Naive thymus-derived CD4-positive, alpha-beta T cell (primary cell): ENCODE measurements at regions of chr12 and their contacts with region 1.

Region 1: GRCh38 chr12:95473884-95474659 is at the start of gene METAP2:
- DNase-seq: peak; percentile 75 to 93 (median 87)
- ATAC-seq: peak; percentile 98
- H3K4me3 ChIP-seq: peak within 1 kb of the TSS; percentile 81
- H3K4me3 Mint-ChIP-seq: peak within 1 kb of the TSS; percentile 96 to 100 (median 99)
- H3K27ac ChIP-seq: peak within 1 kb of the TSS; percentile 92
- H3K27ac Mint-ChIP-seq: peak within 1 kb of the TSS; percentile 95 to 100 (median 99)
- H3K4me1 ChIP-seq: peaks cover 10 to 39% of the 10 kb centered on the region in 2 donors
- H3K4me1 Mint-ChIP-seq: peaks cover 31 to 70% (median 55%) of the 10 kb centered on the region in 7 donors
- H3K27me3 ChIP-seq: no peaks in the 10 kb centered on the region
- H3K27me3 Mint-ChIP-seq: no peaks in the 10 kb centered on the region
- total RNA-seq, gene METAP2: 48.2 to 79.9 (median 57.3) TPM

Region 2: DNA sequence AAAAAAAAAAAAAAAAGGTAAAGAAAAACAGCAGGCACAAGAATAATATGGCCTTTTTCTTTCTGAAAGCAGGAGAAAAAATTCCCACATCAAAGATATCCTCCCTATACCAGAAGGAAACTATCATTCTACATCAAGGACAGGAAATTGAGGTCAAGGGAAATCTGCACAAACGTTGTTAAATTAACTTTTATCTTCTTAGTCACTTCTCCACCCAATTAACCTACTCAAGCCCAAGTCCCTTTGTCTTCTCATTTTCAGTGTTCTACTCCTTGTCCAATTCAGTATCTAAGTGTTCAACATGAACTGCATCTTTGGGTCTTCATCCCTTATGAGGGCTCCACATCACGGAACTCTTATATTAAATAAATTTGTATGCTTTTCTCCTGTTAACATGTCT is 486.3 kb before region 1 on chr12:
- CTCF ChIA-PET with region 1: no interaction called
- POLR2A ChIA-PET with region 1: no interaction called
- intact Hi-C with region 1: loop called in 1 of 2 experiments (anchors 5 kb)
- DNase-seq: peak in 7 of 9 donors; percentile 58 to 75 (median 73)
- ATAC-seq: peak; percentile 72
- H3K4me3 ChIP-seq: no peak overlapping the region
- H3K4me3 Mint-ChIP-seq: peak overlapping the region; percentile 42 to 90 (median 64)
- H3K27ac ChIP-seq: peak overlapping the region; percentile 52
- H3K27ac Mint-ChIP-seq: peak overlapping the region; percentile 50 to 99 (median 97)
- H3K4me1 ChIP-seq: peaks cover 25 to 61% of the 10 kb centered on the region in 2 donors
- H3K4me1 Mint-ChIP-seq: peaks cover 40 to 95% (median 77%) of the 10 kb centered on the region in 7 donors
- H3K27me3 ChIP-seq: no peaks in the 10 kb centered on the region
- H3K27me3 Mint-ChIP-seq: no peaks in the 10 kb centered on the region

Region 3: GRCh38 chr12:95336390-95337067 is 137.5 kb before region 1 on chr12:
- CTCF ChIA-PET with region 1: no interaction called
- POLR2A ChIA-PET with region 1: interaction called, 3 read pairs
- intact Hi-C with region 1: loop called in 1 of 2 experiments (anchors 1 kb)
- DNase-seq: no peak
- ATAC-seq: no peak
- H3K4me3 ChIP-seq: no peak overlapping the region
- H3K4me3 Mint-ChIP-seq: no peak overlapping the region
- H3K27ac ChIP-seq: no peak overlapping the region
- H3K27ac Mint-ChIP-seq: peak overlapping the region in 3 of 9 donors; percentile 31 to 52 (median 48)
- H3K4me1 ChIP-seq: no peaks in the 10 kb centered on the region
- H3K4me1 Mint-ChIP-seq: peaks cover 0 to 9% (median 5%) of the 10 kb centered on the region in 7 donors
- H3K27me3 ChIP-seq: no peaks in the 10 kb centered on the region
- H3K27me3 Mint-ChIP-seq: peaks cover 0 to 2% (median 0%) of the 10 kb centered on the region in 5 donors

Region 4: DNA sequence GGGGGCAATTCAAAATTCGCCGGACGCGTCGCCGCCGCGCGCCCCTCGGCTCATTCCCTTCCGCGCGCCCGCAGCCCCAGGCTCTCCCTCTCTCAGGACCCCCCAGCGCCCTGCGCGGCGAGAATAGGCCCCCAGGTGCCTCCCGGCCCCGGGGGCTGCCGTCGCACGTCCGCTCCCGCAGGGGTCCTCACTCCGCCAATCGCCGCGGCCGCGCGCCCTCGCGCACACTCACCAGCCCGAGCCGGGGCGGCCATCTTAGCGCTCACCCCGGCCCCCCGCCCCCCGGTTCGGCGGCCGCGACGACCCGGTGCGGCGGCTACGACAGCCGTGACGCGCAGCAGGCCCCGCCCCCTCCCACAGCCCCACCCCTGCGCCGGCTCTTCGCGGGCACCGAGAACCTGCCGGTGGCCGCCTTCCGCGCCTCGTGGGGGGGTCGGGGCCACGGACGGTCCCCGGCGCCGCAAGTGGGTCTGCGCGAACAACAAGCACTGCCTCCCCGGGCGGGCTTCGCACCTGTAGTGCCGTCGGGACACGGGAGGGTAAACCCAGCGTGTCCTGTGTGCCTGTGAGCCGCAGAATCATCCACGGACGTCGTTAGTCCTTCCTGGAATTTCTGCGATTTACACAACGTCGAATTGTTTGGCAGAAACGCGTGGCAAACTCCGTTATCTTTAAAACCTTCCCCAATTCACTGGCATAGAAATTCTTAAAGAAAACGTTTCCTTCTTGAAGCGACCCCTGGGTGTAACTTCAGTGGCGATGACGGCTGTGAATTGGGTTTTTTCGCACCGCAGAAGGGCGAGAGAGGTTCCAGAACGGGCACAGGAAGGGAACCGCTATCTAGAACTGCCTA is 74.7 kb after region 1 on chr12:
- CTCF ChIA-PET with region 1: interaction called, 3 read pairs
- POLR2A ChIA-PET with region 1: interaction called, 14 read pairs
- intact Hi-C with region 1: loop called (anchors 1 to 2 kb)
- DNase-seq: peak; percentile 66 to 81 (median 77)
- ATAC-seq: peak; percentile 94
- H3K4me3 ChIP-seq: peak overlapping the region; percentile 75
- H3K4me3 Mint-ChIP-seq: peak overlapping the region; percentile 89 to 96 (median 94)
- H3K27ac ChIP-seq: peak overlapping the region; percentile 96
- H3K27ac Mint-ChIP-seq: peak overlapping the region; percentile 70 to 98 (median 94)
- H3K4me1 ChIP-seq: peaks cover 6 to 23% of the 10 kb centered on the region in 2 donors
- H3K4me1 Mint-ChIP-seq: peaks cover 36 to 73% (median 61%) of the 10 kb centered on the region in 7 donors
- H3K27me3 ChIP-seq: no peaks in the 10 kb centered on the region
- H3K27me3 Mint-ChIP-seq: peaks cover 0 to 22% (median 7%) of the 10 kb centered on the region in 5 donors

Region 5: DNA sequence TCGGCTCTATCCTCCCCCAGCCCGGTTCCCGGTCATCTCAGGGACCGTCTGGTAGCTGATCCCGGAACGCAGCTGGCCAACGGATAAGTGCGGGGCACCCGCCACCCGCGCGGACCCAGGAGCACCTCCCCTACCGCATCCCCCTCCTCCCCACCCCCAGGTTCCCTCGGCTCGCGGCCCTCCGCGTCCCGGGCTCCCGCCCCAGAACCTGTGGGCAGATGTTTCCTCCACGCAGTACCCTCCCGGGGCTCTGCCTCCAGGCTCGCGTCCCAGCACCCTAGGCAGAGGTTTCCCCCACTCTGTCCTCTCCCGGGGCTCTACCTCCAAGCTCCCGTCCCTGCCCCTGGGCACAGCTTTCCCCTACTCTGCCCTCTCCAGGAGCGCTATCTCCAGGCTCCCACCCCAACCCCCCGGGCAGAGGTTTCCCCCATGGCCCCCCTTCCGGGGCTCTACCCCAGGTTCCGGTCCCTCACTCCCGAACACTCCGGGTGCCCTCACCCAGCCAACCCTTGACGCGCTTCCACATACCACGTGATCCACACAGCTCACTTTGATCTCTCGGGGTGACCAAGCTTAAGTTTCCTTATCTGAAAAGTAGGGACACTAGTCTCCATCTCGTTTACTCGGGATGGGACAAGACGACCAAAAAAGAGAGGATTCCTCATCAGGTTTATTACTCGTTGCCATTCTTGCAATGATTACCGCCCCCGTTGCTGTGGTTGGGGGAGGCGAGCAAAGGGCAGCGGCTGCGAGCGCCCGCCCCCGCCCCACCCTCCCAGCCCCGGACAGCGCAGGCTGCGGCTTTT is 468.7 kb after region 1 on chr12 and contains the start of gene CCDC38:
- CTCF ChIA-PET with region 1: no interaction called
- POLR2A ChIA-PET with region 1: interaction called, 7 read pairs
- intact Hi-C with region 1: loop called (anchors 2 kb)
- DNase-seq: peak; percentile 56 to 86 (median 82)
- ATAC-seq: peak; percentile 97
- H3K4me3 ChIP-seq: peak within 1 kb of the TSS; percentile 93
- H3K4me3 Mint-ChIP-seq: peak within 1 kb of the TSS; percentile 88 to 99 (median 96)
- H3K27ac ChIP-seq: peak within 1 kb of the TSS; percentile 86
- H3K27ac Mint-ChIP-seq: peak within 1 kb of the TSS; percentile 85 to 97 (median 89)
- H3K4me1 ChIP-seq: peaks cover 6% of the 10 kb centered on the region in 2 donors
- H3K4me1 Mint-ChIP-seq: peaks cover 4 to 12% (median 10%) of the 10 kb centered on the region in 7 donors
- H3K27me3 ChIP-seq: no peaks in the 10 kb centered on the region
- H3K27me3 Mint-ChIP-seq: peaks cover 0 to 26% (median 0%) of the 10 kb centered on the region in 5 donors
- total RNA-seq, gene CCDC38: 0.07 to 0.27 TPM in 2 of 5 experiments, not detected in the others